ENCODE measurements at regions of chr7 and their contacts with region 1.

Region 1: DNA sequence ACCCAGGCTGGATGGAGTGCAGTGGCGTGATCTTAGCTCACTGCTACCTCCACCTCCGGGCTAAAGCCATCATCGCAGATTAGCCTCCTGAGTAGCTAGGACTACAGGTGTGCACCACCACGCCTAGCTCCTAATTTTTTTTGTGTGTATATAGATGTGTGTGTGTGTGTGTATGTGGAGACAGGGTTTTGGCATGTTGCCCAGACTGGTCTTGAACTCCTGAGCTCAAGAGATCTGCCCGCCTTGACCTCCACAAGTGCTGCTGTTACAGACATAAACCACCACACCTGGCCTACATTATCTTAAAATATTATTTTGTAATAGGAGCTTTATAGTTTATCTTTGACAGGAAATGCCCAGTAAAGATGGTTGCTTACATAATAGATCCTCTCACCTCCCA is 25.0 kb downstream of the FOXP2 start:
- DNase-seq: no peak
- H3K4me3 ChIP-seq: no peak overlapping the region
- H3K27ac ChIP-seq: no peak overlapping the region
- H3K4me1 ChIP-seq: no peaks in the 10 kb centered on the region
- H3K27me3 ChIP-seq: no peaks in the 10 kb centered on the region
- CTCF ChIP-seq: no peak

Region 2: DNA sequence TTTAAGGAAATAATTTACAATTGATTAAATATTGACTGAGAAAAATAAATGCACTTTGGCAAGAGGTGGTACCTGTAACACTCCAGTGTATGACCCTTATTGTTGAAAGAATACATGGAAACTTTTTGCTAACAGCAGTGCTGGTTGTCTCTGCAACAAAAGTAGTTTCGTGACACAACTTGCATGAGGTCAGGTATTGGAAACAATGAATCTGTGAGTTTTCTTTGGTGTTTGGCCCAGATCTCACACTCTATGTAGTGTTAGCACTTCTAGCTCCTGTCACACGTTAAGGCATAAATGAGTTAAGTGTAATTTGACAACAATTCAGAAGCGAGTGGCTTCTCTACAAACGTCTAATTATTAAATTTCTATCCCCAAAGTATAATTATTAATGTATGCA is 344.6 kb after region 1 on chr7:
- CTCF ChIA-PET with region 1: no interaction called
- POLR2A ChIA-PET with region 1: interaction called, 31 read pairs
- intact Hi-C with region 1: no loop called
- DNase-seq: no peak
- H3K4me3 ChIP-seq: no peak overlapping the region
- H3K27ac ChIP-seq: no peak overlapping the region
- H3K4me1 ChIP-seq: no peaks in the 10 kb centered on the region
- H3K27me3 ChIP-seq: no peaks in the 10 kb centered on the region
- CTCF ChIP-seq: no peak

Measured in PC-9 (cell line).